Pancreas (tissue), 10 donors: ENCODE measurements at regions of chr12 and their contacts with region 1.

Region 1: DNA sequence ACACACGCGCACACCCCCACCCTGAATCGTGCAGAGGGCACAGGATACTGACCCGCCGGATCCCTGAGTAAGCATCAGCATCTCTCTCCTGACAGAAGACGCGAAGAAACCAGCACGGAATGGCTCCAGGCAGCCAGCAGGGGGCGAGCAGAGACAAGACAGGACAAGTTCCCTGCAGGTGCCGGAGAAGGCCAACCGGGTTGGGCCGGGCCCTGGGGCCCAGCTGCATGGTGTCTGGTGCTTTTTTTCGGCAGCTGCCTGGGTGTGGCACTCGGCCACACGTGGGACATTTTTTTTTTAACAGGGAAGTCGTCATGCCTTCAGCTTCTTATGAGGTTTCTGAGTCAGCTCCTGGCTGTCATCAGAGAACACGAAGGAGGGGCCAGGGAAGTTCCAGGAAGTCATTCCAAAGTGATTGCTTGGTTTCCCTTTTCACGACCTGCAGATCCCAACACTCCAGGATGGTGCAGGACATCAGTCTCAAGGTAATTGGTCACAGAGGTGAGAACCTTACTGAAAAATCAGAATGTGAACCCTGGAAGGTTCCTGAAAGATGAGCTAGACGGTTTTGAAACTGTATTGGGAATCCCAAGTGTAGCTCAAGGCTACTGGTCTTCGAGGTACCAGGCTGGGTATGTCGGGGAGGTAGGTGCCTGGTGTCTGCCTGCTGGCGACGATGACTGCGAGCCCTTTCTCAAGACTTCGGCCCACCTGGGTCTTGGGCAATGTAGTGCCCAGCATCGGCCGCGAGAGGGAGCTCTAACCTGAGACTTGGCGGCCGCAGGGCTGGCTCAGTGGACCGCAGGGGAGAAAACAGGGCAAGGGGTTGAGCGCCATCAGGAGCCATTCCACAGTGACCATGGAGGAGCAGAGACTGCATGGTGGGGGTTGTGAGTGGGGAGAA is 190.8 kb upstream of the PRMT8 start:
- DNase-seq: peak; percentile 88 to 96 (median 92)
- ATAC-seq: peak; percentile 70 to 86 (median 80)
- H3K4me3 ChIP-seq: peak overlapping the region in 1 of 4 donors; percentile 2
- H3K27ac ChIP-seq: peak overlapping the region in 3 of 4 donors; percentile 53 to 75 (median 67)
- H3K4me1 ChIP-seq: peaks cover 15 to 21% (median 16%) of the 10 kb centered on the region in 3 donors
- H3K27me3 ChIP-seq: no peaks in the 10 kb centered on the region
- CTCF ChIP-seq: peak; percentile 92 to 96 (median 94)

Region 2: GRCh38 chr12:3453990-3454675 is 154.0 kb after region 1 on chr12:
- intact Hi-C with region 1: loop called in 1 of 3 experiments (anchors 10 kb)
- DNase-seq: no peak
- ATAC-seq: no peak
- H3K4me3 ChIP-seq: no peak overlapping the region
- H3K27ac ChIP-seq: no peak overlapping the region
- H3K4me1 ChIP-seq: no peaks in the 10 kb centered on the region
- H3K27me3 ChIP-seq: no peaks in the 10 kb centered on the region
- CTCF ChIP-seq: no peak

Region 3: DNA sequence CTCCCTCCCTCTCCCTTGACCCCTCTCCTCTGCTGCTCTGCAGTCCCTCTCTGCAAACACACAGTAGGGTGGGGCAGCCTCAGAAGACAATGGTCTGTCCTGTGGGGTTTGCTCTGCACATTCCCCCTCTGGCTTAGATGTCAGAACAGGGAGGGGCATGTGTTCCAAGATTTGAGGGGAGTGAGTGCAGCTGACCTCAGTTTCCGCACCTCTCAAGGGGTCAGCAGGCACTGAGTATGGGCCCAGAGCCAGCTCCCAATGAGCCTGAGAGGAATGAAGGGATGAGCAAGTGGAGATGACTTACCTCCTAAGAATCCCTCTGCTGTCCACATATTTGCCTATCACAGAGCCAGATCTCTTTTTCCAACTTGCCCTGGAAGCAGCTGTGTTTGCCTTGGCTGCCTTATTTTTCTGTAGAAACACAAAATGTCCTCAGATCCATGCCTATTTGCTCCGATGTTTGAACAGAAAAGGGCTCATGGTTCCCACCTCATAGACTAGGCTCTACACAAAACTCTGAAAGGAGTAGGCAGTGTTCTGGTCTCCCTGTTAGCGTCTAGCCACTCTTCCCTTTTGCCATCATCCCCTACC is 341.3 kb after region 1 on chr12:
- intact Hi-C with region 1: loop called in 1 of 3 experiments (anchors 10 kb)
- DNase-seq: no peak
- ATAC-seq: no peak
- H3K4me3 ChIP-seq: no peak overlapping the region
- H3K27ac ChIP-seq: no peak overlapping the region
- H3K4me1 ChIP-seq: no peaks in the 10 kb centered on the region
- H3K27me3 ChIP-seq: no peaks in the 10 kb centered on the region
- CTCF ChIP-seq: no peak

Region 4: GRCh38 chr12:3777206-3777809 is 477.1 kb after region 1 on chr12:
- intact Hi-C with region 1: loop called in 2 of 3 experiments (anchors 10 kb)
- DNase-seq: peak in 1 of 6 donors; percentile 24
- ATAC-seq: peak; percentile 74 to 92 (median 88)
- H3K4me3 ChIP-seq: no peak overlapping the region
- H3K27ac ChIP-seq: no peak overlapping the region
- H3K4me1 ChIP-seq: no peaks in the 10 kb centered on the region
- H3K27me3 ChIP-seq: no peaks in the 10 kb centered on the region
- CTCF ChIP-seq: peak; percentile 45 to 59 (median 54)

Region 5: DNA sequence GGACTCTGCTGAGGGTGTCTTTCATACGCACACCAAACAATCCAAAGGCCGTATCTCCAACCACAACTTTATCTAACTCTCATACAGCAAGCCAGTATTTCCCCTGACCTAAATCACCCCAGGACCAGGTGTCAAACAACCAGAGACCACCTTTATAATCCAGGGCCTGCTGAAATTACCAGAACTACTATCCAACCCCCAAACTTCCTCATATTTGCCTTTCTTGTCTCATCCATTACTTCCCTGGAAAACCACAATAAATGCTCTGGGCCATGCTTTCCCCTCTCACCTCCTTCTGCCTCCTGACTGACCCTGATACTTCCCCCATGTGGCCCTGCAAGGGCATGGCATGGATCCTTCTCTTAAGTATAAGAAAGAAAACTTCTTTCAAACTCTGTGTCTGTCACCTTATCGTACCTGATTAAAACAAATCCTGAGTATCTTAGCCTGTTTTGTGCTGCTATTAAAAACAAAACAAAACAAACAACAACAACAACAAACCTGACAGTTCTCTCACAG is 497.4 kb after region 1 on chr12:
- intact Hi-C with region 1: loop called in 2 of 3 experiments (anchors 10 kb)
- DNase-seq: no peak
- ATAC-seq: no peak
- H3K4me3 ChIP-seq: no peak overlapping the region
- H3K27ac ChIP-seq: no peak overlapping the region
- H3K4me1 ChIP-seq: peaks cover 0 to 18% (median 0%) of the 10 kb centered on the region in 3 donors
- H3K27me3 ChIP-seq: no peaks in the 10 kb centered on the region
- CTCF ChIP-seq: no peak

Region 6: GRCh38 chr12:3803865-3804472 is 503.8 kb after region 1 on chr12:
- intact Hi-C with region 1: loop called in 2 of 3 experiments (anchors 10 kb)
- DNase-seq: peak in 5 of 6 donors; percentile 54 to 79 (median 71)
- ATAC-seq: peak; percentile 77 to 96 (median 93)
- H3K4me3 ChIP-seq: no peak overlapping the region
- H3K27ac ChIP-seq: no peak overlapping the region
- H3K4me1 ChIP-seq: peaks cover 0 to 3% (median 0%) of the 10 kb centered on the region in 3 donors
- H3K27me3 ChIP-seq: no peaks in the 10 kb centered on the region
- CTCF ChIP-seq: peak; percentile 62 to 78 (median 68)